ENCODE measurements at regions of chr11 and their contacts with region 1.

Region 1: DNA sequence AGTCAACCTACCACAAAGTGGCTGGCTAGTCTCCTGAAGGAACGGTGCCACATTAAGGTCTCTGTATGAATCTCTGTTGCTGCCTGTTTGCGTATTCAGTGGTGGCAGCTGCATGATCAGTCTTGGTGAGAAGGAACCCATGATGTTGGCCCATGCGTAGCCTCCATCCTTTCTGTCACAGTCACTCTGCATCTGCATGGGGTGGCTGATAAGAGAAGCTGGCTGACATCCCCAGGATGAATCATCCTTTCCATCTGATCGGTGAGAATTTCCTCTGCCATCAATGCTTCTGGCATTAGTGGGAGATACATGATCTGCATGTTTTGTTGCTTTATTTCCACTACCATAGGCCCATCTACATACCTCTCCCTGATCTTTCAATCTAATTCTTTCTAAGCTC is 199.0 kb upstream of the NECTIN1 start:
- DNase-seq: no peak
- ATAC-seq: no peak

Region 2: DNA sequence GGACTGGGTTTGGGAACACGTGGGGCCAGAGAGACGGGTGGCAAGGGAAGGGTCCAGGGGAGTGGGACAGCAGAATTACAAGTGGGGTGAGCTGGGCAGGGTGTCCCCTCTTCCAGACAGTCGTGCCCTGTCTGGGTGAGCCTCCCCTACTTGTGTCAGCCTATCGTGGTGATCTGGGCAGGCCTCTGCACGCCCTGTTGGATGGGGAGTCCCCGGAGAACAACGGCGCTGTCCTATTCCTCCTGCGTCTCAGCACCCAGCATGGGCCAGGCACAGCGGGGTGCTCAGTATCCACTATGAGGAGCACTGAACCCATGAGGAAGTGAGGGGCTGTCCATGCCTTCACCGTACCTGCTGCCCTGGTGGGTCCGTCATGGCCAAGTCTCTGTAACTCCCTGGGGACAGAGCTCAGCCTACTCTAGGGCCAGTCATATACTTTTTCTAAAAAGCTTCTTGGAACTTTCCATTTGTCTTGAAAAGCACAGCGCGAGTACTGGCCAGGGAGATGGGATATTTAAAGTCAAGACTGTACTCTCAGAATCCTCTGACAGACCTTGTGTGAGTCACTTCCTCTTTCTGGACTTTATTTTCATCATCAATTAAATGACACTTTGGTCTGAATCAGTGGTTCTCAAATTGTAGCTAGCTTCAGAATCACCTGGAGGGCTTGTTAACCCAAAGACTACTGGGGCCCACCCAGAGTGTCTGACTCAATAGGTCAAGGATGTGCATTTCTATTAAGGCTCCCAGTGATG is 117.4 kb before region 1 on chr11:
- intact Hi-C with region 1: loop called (anchors 5 kb)
- DNase-seq: no peak
- ATAC-seq: no peak

Region 3: DNA sequence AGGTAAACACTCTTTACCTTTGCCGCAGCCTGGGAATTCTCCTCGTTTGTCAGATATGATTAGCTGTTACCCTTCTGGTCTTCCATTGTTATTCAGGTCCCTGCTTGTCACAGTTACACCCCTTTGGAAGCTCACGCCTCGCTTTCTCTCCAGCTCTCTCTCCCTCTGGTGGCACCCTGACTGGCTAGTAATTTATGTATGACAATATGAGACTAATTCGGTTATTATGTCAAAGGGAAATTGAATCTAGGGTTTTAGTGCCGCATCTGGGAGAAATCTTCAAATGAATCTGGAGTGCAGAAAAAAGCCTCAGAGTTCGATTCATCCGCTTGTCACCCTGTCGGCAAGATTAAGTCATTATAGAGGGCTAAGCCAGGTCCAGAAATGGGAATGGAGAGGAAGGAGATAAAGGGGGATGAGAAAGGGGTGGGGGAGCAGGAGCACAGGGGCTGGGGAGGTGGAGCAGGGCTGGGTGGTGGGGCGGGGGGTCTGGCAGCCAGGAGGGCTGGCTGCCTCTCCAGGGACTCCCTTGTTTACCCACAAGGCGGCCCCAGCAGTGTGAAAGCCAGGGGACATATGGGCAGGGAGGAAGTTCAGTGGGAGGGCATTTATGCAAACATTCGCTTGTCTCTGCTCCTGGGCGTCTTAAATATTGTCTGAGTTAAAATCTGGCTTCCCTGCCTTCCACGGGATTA is 20.0 kb before region 1 on chr11:
- intact Hi-C with region 1: no loop called
- DNase-seq: no peak
- ATAC-seq: no peak